Activated B cell treated with CpG ODN at 0.5 μM for 24 hours (primary cell): ENCODE measurements at regions of chr11 and their contacts with region 1.

Region 1: DNA sequence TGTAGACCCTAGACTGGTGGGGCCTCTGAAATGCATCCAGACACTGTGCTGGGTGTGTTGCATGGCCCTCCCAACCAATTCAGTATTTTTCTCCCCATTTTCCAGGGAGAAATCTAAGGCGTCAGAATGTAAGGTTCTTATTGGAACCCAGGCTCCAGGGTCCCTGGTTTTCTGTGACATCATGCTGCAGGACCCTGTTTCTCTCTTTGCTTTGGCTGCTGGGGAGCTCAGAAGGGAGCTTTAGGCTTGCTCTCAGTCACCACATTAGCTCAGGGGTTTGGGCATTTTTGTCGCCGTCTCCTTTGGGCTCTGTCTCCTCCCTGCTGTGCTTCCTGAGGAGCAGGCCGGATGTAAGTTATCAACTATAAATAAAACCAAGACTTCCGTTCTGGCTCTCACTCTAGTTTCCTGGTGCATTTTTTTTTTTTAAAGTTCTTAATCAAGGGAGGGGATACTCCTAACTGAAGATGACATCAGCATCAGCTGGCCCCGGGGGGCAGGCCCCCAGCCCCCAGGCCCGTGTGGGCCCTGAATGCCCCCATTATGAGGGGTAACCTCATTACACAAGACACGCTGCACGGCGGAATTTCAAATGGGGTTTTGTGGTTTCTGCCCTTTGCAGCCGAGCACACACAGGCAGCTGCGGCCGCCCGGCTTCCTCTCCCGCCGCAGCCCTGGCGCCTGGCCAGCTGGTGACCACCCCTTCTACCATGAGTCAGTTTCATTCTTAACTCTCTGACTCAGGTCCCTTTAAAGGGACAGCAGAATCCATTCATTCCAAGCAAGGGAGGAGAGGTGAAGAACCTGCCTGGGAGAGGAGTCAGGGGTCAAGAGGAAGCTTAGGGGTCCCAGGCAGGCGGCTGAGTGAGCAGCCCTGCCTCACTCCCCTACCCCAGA is 3.2 kb downstream of the MYEOV start:
- DNase-seq: peak; percentile 82
- ATAC-seq: peak; percentile 42
- H3K4me3 Mint-ChIP-seq: peak overlapping the region; percentile 70
- H3K27ac Mint-ChIP-seq: peak overlapping the region; percentile 96
- H3K4me1 Mint-ChIP-seq: peaks cover 79% of the 10 kb centered on the region
- H3K27me3 Mint-ChIP-seq: no peaks in the 10 kb centered on the region
- CTCF ChIP-seq: no peak

Region 2: GRCh38 chr11:68003846-68004550 is 1293.1 kb before region 1 on chr11 and contains the start of gene UNC93B1:
- CTCF ChIA-PET with region 1: no interaction called
- POLR2A ChIA-PET with region 1: no interaction called
- intact Hi-C with region 1: loop called (anchors 10 kb)
- DNase-seq: peak; percentile 80
- ATAC-seq: peak; percentile 66
- H3K4me3 Mint-ChIP-seq: peak within 1 kb of the TSS; percentile 91
- H3K27ac Mint-ChIP-seq: peak within 1 kb of the TSS; percentile 95
- H3K4me1 Mint-ChIP-seq: peaks cover 72% of the 10 kb centered on the region
- H3K27me3 Mint-ChIP-seq: no peaks in the 10 kb centered on the region
- CTCF ChIP-seq: no peak
- total RNA-seq, gene UNC93B1: 117 and 133 TPM in 2 replicates

Region 3: DNA sequence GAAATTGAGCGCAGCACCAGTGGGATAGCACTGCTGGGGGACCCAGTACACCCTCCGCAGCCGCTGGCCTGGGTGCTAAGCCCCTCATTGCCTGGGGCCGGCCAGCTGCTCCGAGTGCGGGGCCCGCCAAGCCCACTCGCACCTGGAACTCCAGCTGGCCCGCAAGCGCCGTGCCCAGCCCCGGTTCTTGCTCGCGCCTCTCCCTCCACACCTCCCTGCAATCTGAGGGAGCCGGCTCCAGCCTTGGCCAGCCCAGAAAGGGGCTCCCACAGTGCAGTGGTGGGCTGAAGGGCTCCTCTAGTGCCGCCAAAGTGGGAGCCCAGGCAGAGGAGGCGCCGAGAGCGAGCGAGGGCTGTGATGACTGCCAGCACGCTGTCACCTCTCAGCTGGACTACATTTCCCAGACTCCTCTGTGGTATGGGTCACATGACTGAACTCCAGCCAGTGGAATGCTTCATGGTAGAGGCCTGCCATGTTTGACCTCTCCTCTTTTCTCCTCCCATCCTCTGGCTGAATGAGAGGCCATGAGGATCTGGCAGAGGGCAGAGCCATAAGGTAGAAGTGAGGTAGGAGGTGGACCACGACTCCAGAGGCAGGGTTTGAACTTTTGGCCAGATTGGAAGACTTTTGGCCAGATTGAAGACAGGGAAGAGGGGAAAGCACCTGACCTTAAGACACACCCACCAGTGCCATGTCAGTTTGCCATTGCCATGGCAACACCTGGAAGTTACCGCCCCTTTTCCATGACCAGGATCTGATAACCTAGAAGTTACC is 322.5 kb before region 1 on chr11:
- CTCF ChIA-PET with region 1: no interaction called
- POLR2A ChIA-PET with region 1: no interaction called
- intact Hi-C with region 1: no loop called
- DNase-seq: no peak
- ATAC-seq: peak; percentile 45
- H3K4me3 Mint-ChIP-seq: no peak overlapping the region
- H3K27ac Mint-ChIP-seq: no peak overlapping the region
- H3K4me1 Mint-ChIP-seq: no peaks in the 10 kb centered on the region
- H3K27me3 Mint-ChIP-seq: peaks cover 20% of the 10 kb centered on the region
- CTCF ChIP-seq: no peak

Region 4: GRCh38 chr11:69101115-69101791 is 195.9 kb before region 1 on chr11:
- CTCF ChIA-PET with region 1: interaction called, 6 read pairs
- POLR2A ChIA-PET with region 1: no interaction called
- intact Hi-C with region 1: loop called (anchors 1 kb)
- DNase-seq: peak; percentile 78
- ATAC-seq: peak; percentile 99
- H3K4me3 Mint-ChIP-seq: no peak overlapping the region
- H3K27ac Mint-ChIP-seq: no peak overlapping the region
- H3K4me1 Mint-ChIP-seq: no peaks in the 10 kb centered on the region
- H3K27me3 Mint-ChIP-seq: peaks cover 6% of the 10 kb centered on the region
- CTCF ChIP-seq: peak; percentile 56

Region 5: DNA sequence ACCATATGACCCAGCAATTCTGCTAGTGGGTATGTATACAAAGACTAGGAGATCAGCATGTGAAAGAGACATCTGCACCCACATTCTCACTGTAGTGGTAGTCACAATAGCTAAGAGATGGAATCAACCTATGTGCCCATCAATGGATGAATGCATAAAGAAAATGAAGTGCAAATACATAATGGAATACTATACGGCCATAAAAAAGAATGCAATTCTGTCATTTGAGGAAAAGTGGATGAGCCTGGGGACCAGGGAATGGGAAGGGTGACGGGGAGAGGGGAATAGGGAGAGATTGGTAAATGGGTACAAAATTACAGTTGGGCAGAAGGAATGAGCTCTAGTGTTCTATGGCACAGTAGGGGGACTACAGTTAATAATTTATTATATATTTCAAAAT is 168.1 kb before region 1 on chr11:
- CTCF ChIA-PET with region 1: no interaction called
- POLR2A ChIA-PET with region 1: no interaction called
- intact Hi-C with region 1: no loop called
- DNase-seq: no peak
- ATAC-seq: no peak
- H3K4me3 Mint-ChIP-seq: no peak overlapping the region
- H3K27ac Mint-ChIP-seq: no peak overlapping the region
- H3K4me1 Mint-ChIP-seq: peaks cover 7% of the 10 kb centered on the region
- H3K27me3 Mint-ChIP-seq: no peaks in the 10 kb centered on the region
- CTCF ChIP-seq: no peak

Region 6: GRCh38 chr11:69166218-69167115 is 130.7 kb before region 1 on chr11:
- CTCF ChIA-PET with region 1: no interaction called
- POLR2A ChIA-PET with region 1: interaction called, 4 read pairs
- intact Hi-C with region 1: loop called (anchors 1 kb)
- DNase-seq: peak; percentile 37
- ATAC-seq: peak; percentile 94
- H3K4me3 Mint-ChIP-seq: peak overlapping the region; percentile 62
- H3K27ac Mint-ChIP-seq: peak overlapping the region; percentile 76
- H3K4me1 Mint-ChIP-seq: peaks cover 18% of the 10 kb centered on the region
- H3K27me3 Mint-ChIP-seq: no peaks in the 10 kb centered on the region
- CTCF ChIP-seq: no peak

Region 7: DNA sequence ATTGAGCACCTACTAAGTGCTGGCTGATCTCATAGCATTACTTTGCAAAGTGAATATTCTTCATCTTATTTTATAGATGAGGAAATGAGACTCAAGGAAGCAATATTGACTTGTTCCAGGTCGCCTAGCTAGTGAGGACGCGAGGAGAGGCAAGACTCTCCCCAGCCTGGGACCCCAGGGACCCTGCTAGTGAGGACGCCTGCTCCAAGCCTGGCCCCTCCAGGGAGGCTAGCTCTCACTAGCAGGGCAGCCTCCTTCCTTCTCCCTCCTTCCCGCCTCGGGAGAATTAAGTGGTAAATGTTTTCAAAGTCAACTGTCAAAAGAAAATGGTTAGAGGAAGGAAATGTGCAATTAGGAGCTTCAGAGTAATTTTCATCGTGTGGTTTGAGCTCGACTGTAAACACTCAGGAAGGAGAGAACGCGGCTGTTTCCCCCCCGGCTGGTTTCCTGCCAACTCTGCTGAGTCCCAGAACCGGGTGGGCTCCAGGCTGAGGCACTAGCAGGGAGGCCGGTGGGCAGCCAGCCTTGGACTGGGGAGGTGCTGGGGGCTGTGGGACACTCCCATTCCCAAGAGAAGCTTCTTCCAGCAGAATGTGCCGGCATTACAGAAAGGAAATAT is 14.7 kb after region 1 on chr11:
- CTCF ChIA-PET with region 1: interaction called, 3 read pairs
- POLR2A ChIA-PET with region 1: interaction called, 15 read pairs
- intact Hi-C with region 1: loop called (anchors 1 kb)
- DNase-seq: no peak
- ATAC-seq: peak; percentile 18
- H3K4me3 Mint-ChIP-seq: peak overlapping the region; percentile 32
- H3K27ac Mint-ChIP-seq: peak overlapping the region; percentile 58
- H3K4me1 Mint-ChIP-seq: peaks cover 27% of the 10 kb centered on the region
- H3K27me3 Mint-ChIP-seq: no peaks in the 10 kb centered on the region
- CTCF ChIP-seq: no peak

Region 8: DNA sequence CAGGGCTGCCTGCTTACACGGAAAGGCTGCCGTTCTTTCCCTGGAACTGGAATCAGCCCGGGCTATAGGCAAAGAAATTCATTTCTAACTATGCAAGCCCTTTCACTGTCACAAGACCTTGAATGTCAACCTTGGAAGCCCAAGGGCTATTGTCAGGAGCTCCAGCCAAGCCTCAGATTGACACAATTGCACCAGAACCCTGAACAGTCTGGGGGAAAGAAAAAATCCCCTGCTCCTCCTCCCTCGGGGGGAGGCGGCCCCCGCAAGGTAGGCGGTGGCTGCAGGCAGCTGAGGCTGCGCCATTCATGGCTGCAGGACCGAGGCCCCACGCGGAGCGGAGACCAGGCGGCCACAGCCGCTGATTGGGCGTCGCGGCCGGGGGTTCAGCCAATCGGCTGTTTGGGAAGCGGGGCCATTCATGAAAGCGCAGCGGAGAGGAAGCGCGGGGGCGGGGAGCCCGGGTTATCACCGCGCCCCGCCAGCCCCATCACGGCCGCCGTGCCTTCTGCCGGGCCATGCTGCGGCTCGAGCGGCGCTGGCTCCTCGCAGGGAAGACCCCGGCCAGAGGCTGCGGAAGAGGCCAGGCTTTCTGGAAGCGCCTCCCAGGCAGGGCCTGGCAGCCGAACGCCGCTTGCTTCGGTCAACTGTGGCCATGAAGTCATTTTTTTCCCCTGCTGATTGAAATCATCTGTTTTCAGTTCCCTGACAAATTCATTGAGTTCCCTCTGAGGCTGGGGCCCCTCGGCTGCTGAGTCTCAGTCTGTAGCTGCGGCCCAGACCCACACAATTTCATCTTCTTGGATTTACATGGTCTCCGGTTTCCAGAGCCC is 146.2 kb after region 1 on chr11:
- CTCF ChIA-PET with region 1: no interaction called
- POLR2A ChIA-PET with region 1: interaction called, 3 read pairs
- intact Hi-C with region 1: loop called (anchors 1 kb)
- DNase-seq: peak; percentile 72
- ATAC-seq: peak; percentile 95
- H3K4me3 Mint-ChIP-seq: peak overlapping the region; percentile 79
- H3K27ac Mint-ChIP-seq: no peak overlapping the region
- H3K4me1 Mint-ChIP-seq: peaks cover 16% of the 10 kb centered on the region
- H3K27me3 Mint-ChIP-seq: peaks cover 10% of the 10 kb centered on the region
- CTCF ChIP-seq: no peak

Region 9: GRCh38 chr11:69670158-69670845 is 373.2 kb after region 1 on chr11:
- CTCF ChIA-PET with region 1: interaction called, 3 read pairs
- POLR2A ChIA-PET with region 1: interaction called, 13 read pairs
- intact Hi-C with region 1: no loop called
- DNase-seq: peak; percentile 58
- ATAC-seq: peak; percentile 31
- H3K4me3 Mint-ChIP-seq: peak overlapping the region; percentile 24
- H3K27ac Mint-ChIP-seq: no peak overlapping the region
- H3K4me1 Mint-ChIP-seq: peaks cover 28% of the 10 kb centered on the region
- H3K27me3 Mint-ChIP-seq: peaks cover under 1% of the 10 kb centered on the region
- CTCF ChIP-seq: peak; percentile 27